ENCODE measurements at regions of chr20 and their contacts with region 1.

Region 1: DNA sequence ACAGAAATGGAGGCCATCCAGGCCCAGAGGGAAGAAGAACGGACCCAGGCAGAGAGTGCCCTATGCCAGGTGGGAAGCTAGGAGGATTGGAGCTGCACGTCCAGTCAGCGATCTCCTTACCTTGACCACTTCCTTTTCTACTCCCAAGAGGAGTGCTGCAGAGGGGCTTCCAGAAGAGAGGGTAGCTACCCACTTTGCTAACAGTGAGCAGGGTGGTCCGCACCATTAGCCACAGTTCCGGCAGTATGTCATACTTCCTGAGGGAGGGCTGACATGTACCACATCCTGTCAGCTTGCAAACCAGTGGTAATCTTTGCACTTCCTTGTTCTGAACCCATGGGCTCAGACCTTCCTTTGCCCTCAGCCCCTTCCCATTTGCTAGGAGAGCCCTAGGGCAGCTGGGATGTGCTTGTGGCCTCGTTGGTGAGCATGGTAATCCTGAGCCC is 35.4 kb downstream of the CEP250 start:
- DNase-seq: peak; percentile 41 to 89 (median 59)
- ATAC-seq: peak; percentile 99
- H3K4me3 ChIP-seq: peak overlapping the region; percentile 94
- H3K4me3 Mint-ChIP-seq: peak overlapping the region; percentile 100
- H3K27ac ChIP-seq: peak overlapping the region; percentile 63 to 87
- H3K27ac Mint-ChIP-seq: peak overlapping the region; percentile 98
- H3K4me1 ChIP-seq: peaks cover 59% of the 10 kb centered on the region
- H3K4me1 Mint-ChIP-seq: peaks cover 72% of the 10 kb centered on the region
- H3K27me3 ChIP-seq: no peaks in the 10 kb centered on the region
- H3K27me3 Mint-ChIP-seq: no peaks in the 10 kb centered on the region
- CTCF ChIP-seq: no peak

Region 2: DNA sequence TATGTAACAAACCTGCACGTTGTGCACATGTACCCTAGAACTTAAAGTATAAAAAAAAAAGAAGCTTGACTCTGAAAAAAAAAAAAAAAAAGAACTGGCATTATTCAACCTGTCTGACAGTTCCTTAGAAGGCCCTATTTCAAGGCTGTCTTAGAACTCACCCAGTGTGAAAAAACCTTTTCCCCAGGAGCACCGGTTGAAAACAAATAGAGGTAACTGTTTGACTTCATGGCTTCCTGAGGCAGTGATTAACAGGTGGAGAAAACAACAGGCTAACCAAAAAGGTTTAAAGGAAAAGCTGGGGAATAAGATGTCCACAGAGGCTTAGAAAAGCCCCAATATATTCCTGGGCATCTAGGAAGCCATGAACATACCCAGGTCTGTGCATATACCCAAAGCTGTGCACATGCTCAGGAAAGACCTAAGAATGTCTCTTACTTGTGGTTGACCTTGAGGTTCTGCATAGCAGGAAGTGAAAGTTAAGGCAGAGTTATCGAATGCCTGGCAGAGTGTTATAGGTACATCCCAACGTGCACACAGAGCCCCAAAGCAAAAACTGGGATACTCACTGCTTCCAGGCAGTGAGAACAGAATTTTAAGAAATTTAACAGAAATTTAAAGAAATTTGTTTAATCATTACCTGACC is 86.0 kb before region 1 on chr20:
- CTCF ChIA-PET with region 1: no interaction called
- POLR2A ChIA-PET with region 1: no interaction called
- intact Hi-C with region 1: no loop called
- DNase-seq: peak in 3 of 14 experiments; percentile 28 to 35 (median 32)
- ATAC-seq: peak; percentile 44
- H3K4me3 ChIP-seq: no peak overlapping the region
- H3K4me3 Mint-ChIP-seq: no peak overlapping the region
- H3K27ac ChIP-seq: no peak overlapping the region
- H3K27ac Mint-ChIP-seq: no peak overlapping the region
- H3K4me1 ChIP-seq: peaks cover 6% of the 10 kb centered on the region
- H3K4me1 Mint-ChIP-seq: peaks cover 22% of the 10 kb centered on the region
- H3K27me3 ChIP-seq: no peaks in the 10 kb centered on the region
- H3K27me3 Mint-ChIP-seq: no peaks in the 10 kb centered on the region
- CTCF ChIP-seq: no peak

Region 3: DNA sequence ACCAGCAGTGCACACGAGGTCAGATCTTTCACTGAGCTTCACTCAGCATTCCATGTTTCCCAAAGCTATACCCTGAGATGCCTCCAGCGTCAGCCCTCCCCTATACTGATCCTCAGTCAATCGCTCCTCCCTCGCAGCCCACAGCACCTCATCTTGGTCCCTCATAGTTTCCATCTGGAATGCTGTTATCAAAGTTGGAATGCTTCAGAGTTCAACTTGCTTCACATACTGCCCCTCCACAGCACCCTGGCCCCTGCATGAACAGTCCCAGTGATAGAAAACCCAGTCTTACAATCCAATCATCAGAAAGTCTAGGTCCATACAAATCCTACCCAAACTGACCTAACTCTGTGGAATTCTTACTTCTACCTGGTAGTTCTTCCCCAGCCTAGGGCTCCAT is 144.9 kb after region 1 on chr20:
- CTCF ChIA-PET with region 1: no interaction called
- POLR2A ChIA-PET with region 1: no interaction called
- intact Hi-C with region 1: no loop called
- DNase-seq: no peak
- ATAC-seq: no peak
- H3K4me3 ChIP-seq: no peak overlapping the region
- H3K4me3 Mint-ChIP-seq: no peak overlapping the region
- H3K27ac ChIP-seq: no peak overlapping the region
- H3K27ac Mint-ChIP-seq: peak overlapping the region; percentile 53
- H3K4me1 ChIP-seq: peaks cover 7% of the 10 kb centered on the region
- H3K4me1 Mint-ChIP-seq: peaks cover 55% of the 10 kb centered on the region
- H3K27me3 ChIP-seq: no peaks in the 10 kb centered on the region
- H3K27me3 Mint-ChIP-seq: no peaks in the 10 kb centered on the region
- CTCF ChIP-seq: no peak

Region 4: DNA sequence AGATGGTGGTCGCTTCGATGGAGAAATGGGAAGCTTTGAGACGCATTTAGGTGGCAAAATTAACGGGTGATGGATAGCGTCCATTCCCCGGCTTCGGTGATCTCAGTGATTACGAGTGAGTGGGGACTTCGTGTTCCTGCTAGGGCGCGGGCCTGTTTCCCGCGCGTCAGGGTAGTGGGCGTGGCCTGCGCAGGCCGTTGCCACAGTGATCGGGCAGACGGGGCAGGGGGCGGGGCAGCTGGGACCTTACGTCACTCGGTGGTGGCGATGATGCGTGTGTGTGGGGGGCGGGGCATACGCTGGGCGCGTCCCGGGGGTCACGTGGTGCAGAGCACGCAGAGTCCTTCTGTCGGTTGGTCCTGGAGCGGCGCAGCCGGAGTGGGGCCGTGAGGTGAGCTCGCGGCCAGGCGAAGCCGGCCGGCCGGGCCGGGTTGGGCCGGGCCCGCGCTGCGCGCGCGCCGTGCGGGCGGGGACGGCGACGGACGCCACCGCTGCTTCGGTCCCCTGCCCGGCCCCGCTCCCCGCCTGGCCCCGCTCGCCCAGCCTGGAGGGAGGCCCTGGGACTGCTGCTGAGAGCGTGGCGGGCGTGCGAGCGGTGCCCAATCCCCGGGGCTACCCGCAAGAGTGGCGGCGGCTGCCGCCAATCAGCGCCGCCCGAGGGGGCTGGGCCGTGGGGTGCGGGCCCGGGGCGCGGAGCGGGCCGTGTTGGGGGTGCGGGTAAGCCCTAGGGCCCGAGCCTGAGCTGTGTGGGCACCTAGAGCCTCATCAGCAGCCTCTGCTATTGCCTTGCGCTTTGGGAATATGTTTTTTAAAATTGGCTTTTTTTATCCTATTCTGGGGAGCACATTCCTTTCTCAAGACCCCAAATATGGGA is 281.2 kb after region 1 on chr20 and contains the start of gene PHF20:
- CTCF ChIA-PET with region 1: no interaction called
- POLR2A ChIA-PET with region 1: interaction called, 10 read pairs
- intact Hi-C with region 1: no loop called
- DNase-seq: peak; percentile 100
- ATAC-seq: peak; percentile 84
- H3K4me3 ChIP-seq: peak within 1 kb of the TSS; percentile 79
- H3K4me3 Mint-ChIP-seq: peak within 1 kb of the TSS; percentile 97
- H3K27ac ChIP-seq: peak within 1 kb of the TSS; percentile 86 to 96
- H3K27ac Mint-ChIP-seq: peak within 1 kb of the TSS; percentile 96
- H3K4me1 ChIP-seq: peaks cover 84% of the 10 kb centered on the region
- H3K4me1 Mint-ChIP-seq: peaks cover 75% of the 10 kb centered on the region
- H3K27me3 ChIP-seq: no peaks in the 10 kb centered on the region
- H3K27me3 Mint-ChIP-seq: no peaks in the 10 kb centered on the region
- CTCF ChIP-seq: no peak
- total RNA-seq, gene PHF20: 119 to 126 TPM

Measured in CD4-positive, alpha-beta T cell (primary cell).